PC-9 (cell line): ENCODE measurements at regions of chr14 and their contacts with region 1.

Region 1: GRCh38 chr14:80213599-80213998 is 2.3 kb upstream of the DIO2 start:
- DNase-seq: peak in 1 of 2 experiments; percentile 26
- H3K4me3 ChIP-seq: no peak overlapping the region
- H3K27ac ChIP-seq: no peak overlapping the region
- H3K4me1 ChIP-seq: no peaks in the 10 kb centered on the region
- H3K27me3 ChIP-seq: no peaks in the 10 kb centered on the region
- CTCF ChIP-seq: peak; percentile 52

Region 2: GRCh38 chr14:80055667-80056496 is 157.7 kb before region 1 on chr14:
- CTCF ChIA-PET with region 1: interaction called, 3 read pairs
- POLR2A ChIA-PET with region 1: no interaction called
- intact Hi-C with region 1: loop called (anchors 5 kb)
- DNase-seq: peak; percentile 47 to 55
- H3K4me3 ChIP-seq: no peak overlapping the region
- H3K27ac ChIP-seq: no peak overlapping the region
- H3K4me1 ChIP-seq: no peaks in the 10 kb centered on the region
- H3K27me3 ChIP-seq: no peaks in the 10 kb centered on the region
- CTCF ChIP-seq: peak; percentile 82

Region 3: DNA sequence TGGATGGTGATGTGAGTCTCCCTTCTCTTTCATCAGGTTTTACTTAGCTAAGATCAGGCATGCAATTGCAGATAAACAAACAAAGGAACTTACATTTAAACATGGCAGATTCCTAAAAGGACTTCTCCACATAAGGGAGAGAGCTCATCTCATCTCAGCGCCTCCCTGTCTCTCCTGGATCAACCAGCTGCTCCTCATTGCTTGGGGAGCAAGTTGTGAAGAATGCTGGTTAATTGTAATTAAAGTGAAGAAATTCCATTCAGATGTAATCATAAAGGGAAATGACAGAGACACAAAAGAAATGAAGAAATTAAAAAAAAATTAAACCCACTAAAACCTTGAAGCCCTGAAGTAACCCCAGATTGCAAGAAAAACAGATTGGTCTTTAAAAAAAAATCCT is 102.1 kb after region 1 on chr14:
- CTCF ChIA-PET with region 1: no interaction called
- POLR2A ChIA-PET with region 1: no interaction called
- intact Hi-C with region 1: no loop called
- DNase-seq: no peak
- H3K4me3 ChIP-seq: no peak overlapping the region
- H3K27ac ChIP-seq: no peak overlapping the region
- H3K4me1 ChIP-seq: no peaks in the 10 kb centered on the region
- H3K27me3 ChIP-seq: no peaks in the 10 kb centered on the region
- CTCF ChIP-seq: no peak

Region 4: GRCh38 chr14:80425686-80426085 is 212.1 kb after region 1 on chr14:
- CTCF ChIA-PET with region 1: no interaction called
- POLR2A ChIA-PET with region 1: interaction called, 8 read pairs
- intact Hi-C with region 1: loop called (anchors 2 kb)
- DNase-seq: peak; percentile 54 to 99
- H3K4me3 ChIP-seq: no peak overlapping the region
- H3K27ac ChIP-seq: peak overlapping the region; percentile 92
- H3K4me1 ChIP-seq: peaks cover 29% of the 10 kb centered on the region
- H3K27me3 ChIP-seq: no peaks in the 10 kb centered on the region
- CTCF ChIP-seq: no peak

Region 5: DNA sequence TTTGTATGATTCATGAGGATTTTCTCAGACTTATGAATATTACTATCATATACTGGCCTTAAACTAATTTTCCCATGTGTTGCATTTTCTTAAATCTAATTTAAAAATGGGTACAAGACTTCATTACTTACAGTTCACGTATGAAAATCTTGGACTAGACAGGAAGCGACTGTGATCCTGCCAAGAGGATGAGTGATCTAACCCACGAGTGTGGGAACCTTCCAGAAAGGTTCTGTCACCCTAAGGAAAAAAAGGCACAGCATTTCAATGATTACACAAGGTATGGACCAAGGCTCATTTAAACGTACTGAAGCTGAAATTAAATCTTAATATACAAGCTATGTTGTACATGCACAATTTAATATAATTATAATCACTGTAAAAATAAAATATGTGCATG is 291.2 kb after region 1 on chr14:
- CTCF ChIA-PET with region 1: no interaction called
- POLR2A ChIA-PET with region 1: no interaction called
- intact Hi-C with region 1: no loop called
- DNase-seq: no peak
- H3K4me3 ChIP-seq: no peak overlapping the region
- H3K27ac ChIP-seq: no peak overlapping the region
- H3K4me1 ChIP-seq: no peaks in the 10 kb centered on the region
- H3K27me3 ChIP-seq: no peaks in the 10 kb centered on the region
- CTCF ChIP-seq: no peak

Region 6: DNA sequence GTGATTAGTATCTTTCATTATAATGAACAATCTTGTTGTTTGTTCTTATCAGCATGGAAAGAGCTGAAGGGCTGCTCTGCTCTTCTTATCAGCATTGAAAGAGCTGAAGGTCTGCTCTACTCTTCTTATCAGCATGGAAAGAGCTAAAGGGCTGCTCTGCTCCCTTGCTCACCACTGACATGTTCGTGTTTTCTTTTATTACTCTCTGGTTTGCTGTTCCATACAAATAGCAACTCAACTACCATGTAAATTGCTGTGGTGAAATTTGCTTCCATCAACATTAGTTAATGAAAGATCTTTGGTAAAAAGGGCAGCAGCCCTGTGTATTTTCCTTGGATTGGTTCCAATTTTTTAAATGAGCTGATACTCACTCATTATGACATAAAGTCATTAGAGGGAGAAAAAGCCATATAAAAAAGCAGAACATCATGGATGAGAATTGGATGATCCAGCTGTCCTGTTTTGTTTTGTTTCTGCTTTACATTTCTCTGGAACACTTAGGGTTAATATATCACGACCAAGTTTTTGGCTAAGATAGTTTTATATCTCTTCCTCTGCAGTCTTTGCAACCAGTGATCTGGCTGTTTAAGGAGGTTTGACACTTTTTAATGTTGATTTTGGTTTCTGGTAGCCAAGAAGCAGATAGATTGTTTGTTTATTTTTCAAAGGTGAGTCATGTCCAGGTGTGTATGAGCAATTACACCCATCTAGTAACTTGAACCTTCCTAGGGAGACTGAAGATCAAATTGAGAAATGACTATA is 371.3 kb after region 1 on chr14:
- CTCF ChIA-PET with region 1: no interaction called
- POLR2A ChIA-PET with region 1: no interaction called
- intact Hi-C with region 1: loop called (anchors 2 kb)
- DNase-seq: peak in 1 of 2 experiments; percentile 95
- H3K4me3 ChIP-seq: no peak overlapping the region
- H3K27ac ChIP-seq: peak overlapping the region; percentile 76
- H3K4me1 ChIP-seq: peaks cover 29% of the 10 kb centered on the region
- H3K27me3 ChIP-seq: no peaks in the 10 kb centered on the region
- CTCF ChIP-seq: no peak

Region 7: DNA sequence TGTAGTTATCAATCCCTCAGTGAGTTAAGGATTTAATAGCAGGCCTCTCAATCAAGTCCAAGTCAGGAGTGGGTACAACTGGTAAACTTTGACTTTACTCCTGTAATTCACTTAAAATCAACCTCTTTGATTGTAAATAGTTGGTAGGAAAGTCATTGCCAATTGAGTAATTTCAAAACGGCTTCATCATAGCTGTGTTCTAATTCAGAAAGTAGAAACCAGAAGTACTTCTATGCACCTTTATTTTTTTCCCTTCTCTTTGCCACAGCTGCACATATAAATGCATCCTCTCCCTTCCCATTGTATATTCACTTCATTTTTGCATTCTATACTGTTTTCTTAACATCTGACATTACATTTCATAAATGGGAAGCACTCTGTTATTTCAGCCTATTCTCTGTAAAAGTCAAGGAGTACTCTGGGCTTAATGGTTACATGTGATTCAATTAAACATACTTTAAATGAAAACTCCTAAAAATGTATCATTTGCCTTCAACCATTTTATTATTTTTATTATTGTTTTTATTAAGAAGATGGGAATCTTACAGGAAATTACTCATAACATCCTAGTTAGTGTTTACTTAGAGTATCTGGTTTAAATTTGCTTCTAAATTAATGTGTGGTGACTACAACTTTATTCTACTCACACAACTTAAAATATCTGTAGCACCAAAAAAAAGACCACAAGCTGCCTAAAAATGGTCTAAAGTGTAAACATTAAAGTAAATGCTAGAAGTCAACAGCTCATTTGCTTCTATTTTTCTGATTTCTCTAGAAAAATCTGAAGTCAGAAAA is 556.7 kb after region 1 on chr14:
- CTCF ChIA-PET with region 1: no interaction called
- POLR2A ChIA-PET with region 1: interaction called, 13 read pairs
- intact Hi-C with region 1: no loop called
- DNase-seq: no peak
- H3K4me3 ChIP-seq: no peak overlapping the region
- H3K27ac ChIP-seq: no peak overlapping the region
- H3K4me1 ChIP-seq: no peaks in the 10 kb centered on the region
- H3K27me3 ChIP-seq: no peaks in the 10 kb centered on the region
- CTCF ChIP-seq: no peak

Region 8: DNA sequence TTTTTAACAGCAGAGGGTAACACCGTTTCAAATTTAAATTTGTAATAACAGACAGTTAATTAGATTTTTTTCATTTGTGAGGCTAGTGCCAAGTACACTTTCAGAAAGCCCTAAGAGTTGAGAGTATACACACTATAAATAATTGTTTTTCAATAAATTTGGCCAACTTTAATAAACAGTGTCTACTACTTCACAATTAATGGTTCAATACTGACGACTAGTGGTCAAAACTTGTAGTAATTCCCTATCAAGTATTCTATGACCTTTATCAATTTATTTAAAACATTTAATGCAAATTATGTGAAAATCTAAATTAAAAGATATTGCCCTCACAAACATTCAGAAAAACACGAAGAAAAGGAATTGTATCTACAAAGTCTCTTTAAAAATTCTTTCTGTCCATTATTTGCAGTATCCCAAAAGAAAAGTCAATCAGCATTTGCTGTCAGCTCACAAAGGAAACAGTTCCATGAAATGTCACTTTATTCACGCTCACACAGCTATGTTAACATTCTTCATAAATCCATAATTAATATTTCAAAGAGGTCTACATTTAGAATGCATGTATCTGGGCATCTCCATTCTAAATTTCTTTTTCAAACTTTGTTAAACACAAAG is 636.7 kb after region 1 on chr14:
- CTCF ChIA-PET with region 1: no interaction called
- POLR2A ChIA-PET with region 1: no interaction called
- intact Hi-C with region 1: loop called (anchors 1 kb)
- DNase-seq: no peak
- H3K4me3 ChIP-seq: no peak overlapping the region
- H3K27ac ChIP-seq: no peak overlapping the region
- H3K4me1 ChIP-seq: peaks cover 7% of the 10 kb centered on the region; the same call in 1 of the 2 replicates
- H3K27me3 ChIP-seq: no peaks in the 10 kb centered on the region
- CTCF ChIP-seq: peak; percentile 94